Caco-2 (cell line): ENCODE measurements at regions of chr12 and their contacts with region 1.

Region 1: GRCh38 chr12:124680863-124681778 is 113.7 kb upstream of the NCOR2 start:
- DNase-seq: peak; percentile 75 to 78
- H3K4me3 ChIP-seq: no peak overlapping the region
- H3K4me3 Mint-ChIP-seq: no peak overlapping the region
- H3K27ac Mint-ChIP-seq: peak overlapping the region; percentile 97
- H3K4me1 ChIP-seq: peaks cover 61% of the 10 kb centered on the region
- H3K4me1 Mint-ChIP-seq: peaks cover 56% of the 10 kb centered on the region
- H3K27me3 ChIP-seq: no peaks in the 10 kb centered on the region
- H3K27me3 Mint-ChIP-seq: no peaks in the 10 kb centered on the region
- CTCF ChIP-seq: peak; percentile 20 to 45

Region 2: GRCh38 chr12:124567661-124568373 is 113.3 kb before region 1 on chr12:
- CTCF ChIA-PET with region 1: interaction called, 3 read pairs
- POLR2A ChIA-PET with region 1: no interaction called
- intact Hi-C with region 1: loop called (anchors 1 kb)
- DNase-seq: peak; percentile 79 to 84
- H3K4me3 ChIP-seq: peak overlapping the region; percentile 57
- H3K4me3 Mint-ChIP-seq: peak overlapping the region; percentile 77
- H3K27ac Mint-ChIP-seq: peak overlapping the region; percentile 72
- H3K4me1 ChIP-seq: peaks cover 6% of the 10 kb centered on the region
- H3K4me1 Mint-ChIP-seq: no peaks in the 10 kb centered on the region
- H3K27me3 ChIP-seq: no peaks in the 10 kb centered on the region
- H3K27me3 Mint-ChIP-seq: no peaks in the 10 kb centered on the region
- CTCF ChIP-seq: no peak

Region 3: GRCh38 chr12:124633273-124633966 is 47.7 kb before region 1 on chr12:
- CTCF ChIA-PET with region 1: no interaction called
- POLR2A ChIA-PET with region 1: interaction called, 5 read pairs
- intact Hi-C with region 1: loop called (anchors 2 kb)
- DNase-seq: peak; percentile 69 to 91
- H3K4me3 ChIP-seq: no peak overlapping the region
- H3K4me3 Mint-ChIP-seq: peak overlapping the region; percentile 39
- H3K27ac Mint-ChIP-seq: peak overlapping the region; percentile 92
- H3K4me1 ChIP-seq: peaks cover 72% of the 10 kb centered on the region
- H3K4me1 Mint-ChIP-seq: peaks cover 38% of the 10 kb centered on the region
- H3K27me3 ChIP-seq: no peaks in the 10 kb centered on the region
- H3K27me3 Mint-ChIP-seq: no peaks in the 10 kb centered on the region
- CTCF ChIP-seq: peak in 1 of 2 experiments; percentile 27

Region 4: GRCh38 chr12:124700810-124701592 is 19.9 kb after region 1 on chr12:
- CTCF ChIA-PET with region 1: interaction called, 3 read pairs
- POLR2A ChIA-PET with region 1: no interaction called
- intact Hi-C with region 1: loop called (anchors 2 kb)
- DNase-seq: peak; percentile 59 to 79
- H3K4me3 ChIP-seq: no peak overlapping the region
- H3K4me3 Mint-ChIP-seq: no peak overlapping the region
- H3K27ac Mint-ChIP-seq: peak overlapping the region; percentile 81
- H3K4me1 ChIP-seq: peaks cover 15% of the 10 kb centered on the region
- H3K4me1 Mint-ChIP-seq: peaks cover 12% of the 10 kb centered on the region
- H3K27me3 ChIP-seq: no peaks in the 10 kb centered on the region
- H3K27me3 Mint-ChIP-seq: no peaks in the 10 kb centered on the region
- CTCF ChIP-seq: no peak

Region 5: GRCh38 chr12:124709722-124710677 is 28.9 kb after region 1 on chr12:
- CTCF ChIA-PET with region 1: interaction called, 3 read pairs
- POLR2A ChIA-PET with region 1: no interaction called
- intact Hi-C with region 1: loop called (anchors 1 kb)
- DNase-seq: no peak
- H3K4me3 ChIP-seq: no peak overlapping the region
- H3K4me3 Mint-ChIP-seq: no peak overlapping the region
- H3K27ac Mint-ChIP-seq: no peak overlapping the region
- H3K4me1 ChIP-seq: peaks cover 6% of the 10 kb centered on the region
- H3K4me1 Mint-ChIP-seq: peaks cover 12% of the 10 kb centered on the region
- H3K27me3 ChIP-seq: no peaks in the 10 kb centered on the region
- H3K27me3 Mint-ChIP-seq: no peaks in the 10 kb centered on the region
- CTCF ChIP-seq: no peak

Region 6: DNA sequence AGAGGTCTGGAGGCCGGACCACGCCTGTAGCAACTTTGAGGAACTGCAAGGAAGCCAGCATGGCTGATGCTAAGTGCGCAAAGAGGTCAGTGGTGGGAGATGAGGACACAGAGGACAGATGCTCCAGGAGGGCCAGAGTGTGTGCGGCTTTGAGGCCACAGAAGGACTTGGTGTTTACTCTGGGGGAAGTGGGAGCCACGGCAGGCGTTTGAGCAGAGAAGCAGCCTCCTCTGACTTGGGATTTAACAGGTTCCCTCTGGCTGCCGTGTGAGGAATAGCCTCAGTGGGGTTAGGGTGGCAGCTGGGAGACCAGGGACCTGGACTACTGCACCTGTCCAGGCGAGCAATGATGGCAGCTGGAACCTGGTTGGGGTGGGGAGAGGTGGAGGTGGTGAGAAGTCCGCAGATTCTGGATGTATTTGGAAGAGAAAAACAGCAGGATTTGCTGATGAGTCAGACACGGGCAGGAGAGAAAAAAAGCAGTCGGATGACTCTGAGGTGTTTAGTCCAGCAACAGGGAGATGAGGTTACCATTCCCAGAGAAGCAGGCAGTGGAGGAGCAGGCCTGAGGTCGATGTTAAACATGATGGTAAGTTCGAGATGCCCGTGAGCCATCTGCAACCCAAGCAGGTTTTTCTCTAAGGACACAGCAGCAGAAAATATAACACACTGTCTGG is 39.0 kb after region 1 on chr12:
- CTCF ChIA-PET with region 1: no interaction called
- POLR2A ChIA-PET with region 1: no interaction called
- intact Hi-C with region 1: loop called (anchors 5 kb)
- DNase-seq: no peak
- H3K4me3 ChIP-seq: no peak overlapping the region
- H3K4me3 Mint-ChIP-seq: no peak overlapping the region
- H3K27ac Mint-ChIP-seq: no peak overlapping the region
- H3K4me1 ChIP-seq: peaks cover 11% of the 10 kb centered on the region
- H3K4me1 Mint-ChIP-seq: peaks cover 24% of the 10 kb centered on the region
- H3K27me3 ChIP-seq: no peaks in the 10 kb centered on the region
- H3K27me3 Mint-ChIP-seq: no peaks in the 10 kb centered on the region
- CTCF ChIP-seq: peak in 1 of 2 experiments; percentile 31

Region 7: DNA sequence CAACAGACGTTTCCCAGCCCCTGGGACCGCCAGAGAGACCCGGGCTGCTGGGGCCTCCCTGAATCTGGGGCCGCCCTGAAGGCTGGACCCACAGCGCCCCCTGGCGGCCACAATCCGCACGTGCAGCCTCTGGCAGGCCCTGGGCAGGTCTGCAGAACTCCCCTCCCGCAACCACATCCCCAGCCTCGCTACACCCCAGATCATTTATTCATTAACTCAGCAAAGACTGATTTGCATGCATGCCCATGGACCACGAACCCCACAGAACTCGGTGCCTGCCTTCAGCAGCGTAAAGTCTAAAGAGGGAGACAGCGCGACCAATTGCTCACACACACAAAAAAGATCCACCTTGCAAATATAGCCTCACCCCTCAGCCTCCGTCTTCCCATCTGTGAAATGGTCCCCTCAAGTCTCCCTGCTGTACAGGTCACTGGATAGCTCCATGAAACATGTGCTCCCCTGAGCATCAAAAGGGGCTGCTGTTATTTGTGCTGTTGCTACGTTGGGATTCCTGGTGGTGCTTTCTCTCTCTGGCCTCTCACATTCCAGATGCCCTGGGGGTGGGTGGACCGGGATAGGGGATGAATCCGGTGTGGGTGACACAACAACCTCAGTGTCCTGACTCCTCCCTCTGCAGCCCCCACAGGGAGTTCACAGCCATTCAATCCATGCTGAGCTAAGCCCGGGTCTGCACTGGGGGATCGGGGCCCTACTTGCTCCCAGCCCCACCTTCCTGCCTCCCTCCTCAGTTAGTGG is 86.1 kb after region 1 on chr12:
- CTCF ChIA-PET with region 1: interaction called, 4 read pairs
- POLR2A ChIA-PET with region 1: no interaction called
- intact Hi-C with region 1: loop called (anchors 5 kb)
- DNase-seq: peak; percentile 74 to 88
- H3K4me3 ChIP-seq: no peak overlapping the region
- H3K4me3 Mint-ChIP-seq: no peak overlapping the region
- H3K27ac Mint-ChIP-seq: no peak overlapping the region
- H3K4me1 ChIP-seq: peaks cover 19% of the 10 kb centered on the region; the same call in 1 of the 2 replicates
- H3K4me1 Mint-ChIP-seq: peaks cover 36% of the 10 kb centered on the region
- H3K27me3 ChIP-seq: no peaks in the 10 kb centered on the region
- H3K27me3 Mint-ChIP-seq: no peaks in the 10 kb centered on the region
- CTCF ChIP-seq: peak; percentile 93 to 99